ENCODE measurements at regions of chr4 and their contacts with region 1.

Region 1: GRCh38 chr4:27000820-27001219 is 140.2 kb downstream of the STIM2 start:
- DNase-seq: peak in 4 of 5 donors; percentile 20 to 28 (median 23)
- H3K4me3 ChIP-seq: no peak overlapping the region
- H3K4me3 Mint-ChIP-seq: no peak overlapping the region
- H3K27ac ChIP-seq: no peak overlapping the region
- H3K27ac Mint-ChIP-seq: peak overlapping the region in 5 of 7 donors; percentile 13 to 73 (median 64)
- H3K4me1 ChIP-seq: peaks cover 26% of the 10 kb centered on the region
- H3K4me1 Mint-ChIP-seq: peaks cover 33 to 43% (median 39%) of the 10 kb centered on the region in 4 donors
- H3K27me3 ChIP-seq: no peaks in the 10 kb centered on the region
- H3K27me3 Mint-ChIP-seq: no peaks in the 10 kb centered on the region

Region 2: GRCh38 chr4:26663888-26664287 is 336.9 kb before region 1 on chr4:
- CTCF ChIA-PET with region 1: no interaction called
- POLR2A ChIA-PET with region 1: no interaction called
- intact Hi-C with region 1: loop called (anchors 10 kb)
- DNase-seq: no peak
- H3K4me3 ChIP-seq: no peak overlapping the region
- H3K4me3 Mint-ChIP-seq: no peak overlapping the region
- H3K27ac ChIP-seq: no peak overlapping the region
- H3K27ac Mint-ChIP-seq: peak overlapping the region in 1 of 7 donors; percentile 3
- H3K4me1 ChIP-seq: no peaks in the 10 kb centered on the region
- H3K4me1 Mint-ChIP-seq: no peaks in the 10 kb centered on the region
- H3K27me3 ChIP-seq: no peaks in the 10 kb centered on the region
- H3K27me3 Mint-ChIP-seq: no peaks in the 10 kb centered on the region

Region 3: DNA sequence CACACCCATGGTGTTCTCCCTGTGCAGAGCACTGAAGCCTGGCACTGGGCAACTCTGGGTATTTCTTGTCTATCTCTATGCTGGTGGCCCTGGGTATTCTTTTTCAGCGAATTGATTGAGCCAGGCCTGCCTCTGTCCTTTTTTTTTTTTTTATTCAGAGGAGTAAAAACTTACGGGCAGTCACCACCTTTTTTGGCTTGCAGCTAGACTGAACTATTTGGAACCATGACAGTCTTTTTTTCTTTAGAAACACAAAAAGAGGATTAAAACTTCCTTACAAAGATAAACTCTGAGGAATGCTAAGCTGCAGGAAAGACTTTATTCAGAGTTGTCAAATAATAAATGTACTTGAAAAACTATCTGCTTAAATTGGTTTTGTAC is 259.3 kb before region 1 on chr4:
- CTCF ChIA-PET with region 1: no interaction called
- POLR2A ChIA-PET with region 1: no interaction called
- intact Hi-C with region 1: loop called (anchors 5 kb)
- DNase-seq: no peak
- H3K4me3 ChIP-seq: no peak overlapping the region
- H3K4me3 Mint-ChIP-seq: no peak overlapping the region
- H3K27ac ChIP-seq: no peak overlapping the region
- H3K27ac Mint-ChIP-seq: no peak overlapping the region
- H3K4me1 ChIP-seq: no peaks in the 10 kb centered on the region
- H3K4me1 Mint-ChIP-seq: peaks cover 0 to 4% (median 1%) of the 10 kb centered on the region in 4 donors
- H3K27me3 ChIP-seq: no peaks in the 10 kb centered on the region
- H3K27me3 Mint-ChIP-seq: no peaks in the 10 kb centered on the region

Region 4: GRCh38 chr4:26787461-26788340 is 213.1 kb before region 1 on chr4:
- CTCF ChIA-PET with region 1: interaction called, 15 read pairs
- POLR2A ChIA-PET with region 1: no interaction called
- intact Hi-C with region 1: no loop called
- DNase-seq: peak; percentile 16 to 46 (median 21)
- H3K4me3 ChIP-seq: no peak overlapping the region
- H3K4me3 Mint-ChIP-seq: no peak overlapping the region
- H3K27ac ChIP-seq: no peak overlapping the region
- H3K27ac Mint-ChIP-seq: peak overlapping the region in 3 of 7 donors; percentile 48 to 70 (median 64)
- H3K4me1 ChIP-seq: no peaks in the 10 kb centered on the region
- H3K4me1 Mint-ChIP-seq: peaks cover 5 to 10% (median 6%) of the 10 kb centered on the region in 4 donors
- H3K27me3 ChIP-seq: no peaks in the 10 kb centered on the region
- H3K27me3 Mint-ChIP-seq: no peaks in the 10 kb centered on the region